Heart right ventricle (tissue), 16 donors: ENCODE measurements at regions of chr15 and their contacts with region 1.

Region 1: DNA sequence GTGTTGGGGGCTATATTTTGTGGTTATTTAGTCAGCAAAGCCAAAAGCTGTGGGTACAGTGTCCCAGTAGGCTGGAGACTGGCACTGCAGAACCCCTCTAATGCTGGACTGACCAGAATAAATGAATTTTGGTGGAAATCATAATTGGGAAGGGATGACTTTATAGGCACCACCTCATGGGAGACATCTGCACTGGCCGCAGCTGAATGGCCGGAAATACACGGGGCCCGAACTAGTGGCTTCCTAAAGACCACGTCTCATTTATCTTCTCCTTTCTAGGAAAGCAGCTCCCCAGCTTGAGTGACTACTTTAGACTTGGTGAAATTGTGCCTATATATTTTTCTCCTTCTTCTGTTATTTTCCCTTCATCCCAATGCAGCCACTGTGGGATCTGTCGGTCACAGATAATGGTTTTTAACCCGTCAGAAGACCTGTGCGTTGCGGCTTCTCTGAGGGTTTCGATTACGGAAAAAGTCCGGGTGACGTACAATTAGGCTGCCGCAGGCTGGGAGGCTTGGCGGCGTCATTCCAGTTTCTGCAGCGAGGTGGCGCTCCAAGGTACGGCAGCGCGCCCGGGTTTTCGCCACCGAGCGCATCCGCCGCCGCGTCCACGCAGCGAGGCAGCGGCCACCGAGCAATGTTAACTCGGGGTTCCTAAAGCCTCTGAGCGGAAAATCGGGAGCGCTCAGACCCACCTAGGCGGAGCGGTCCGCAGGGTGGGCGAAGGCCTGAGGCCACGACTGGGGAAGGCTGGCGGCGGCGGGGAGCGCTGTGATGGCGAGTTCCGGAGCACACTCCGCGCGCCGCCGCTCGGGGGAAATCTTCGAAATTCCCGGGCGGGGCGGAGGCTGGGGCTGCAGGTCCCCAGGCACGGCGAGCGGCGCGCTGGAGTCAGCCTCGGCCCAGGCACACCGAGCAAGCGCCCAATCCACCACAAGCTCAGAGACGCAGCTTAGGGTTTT is 26.3 kb downstream of the NR2F2 start:
- DNase-seq: peak; percentile 82 to 85
- ATAC-seq: peak; percentile 50 to 71 (median 66)
- H3K4me3 ChIP-seq: peak overlapping the region; percentile 37 to 95 (median 68)
- H3K27ac ChIP-seq: peak overlapping the region in 9 of 10 donors; percentile 49 to 89 (median 70)
- H3K4me1 ChIP-seq: peaks cover 0 to 75% (median 41%) of the 10 kb centered on the region in 9 donors
- H3K27me3 ChIP-seq: peaks cover 0 to 98% (median 82%) of the 10 kb centered on the region in 7 donors
- CTCF ChIP-seq: peak; percentile 95 to 99 (median 98)

Region 2: DNA sequence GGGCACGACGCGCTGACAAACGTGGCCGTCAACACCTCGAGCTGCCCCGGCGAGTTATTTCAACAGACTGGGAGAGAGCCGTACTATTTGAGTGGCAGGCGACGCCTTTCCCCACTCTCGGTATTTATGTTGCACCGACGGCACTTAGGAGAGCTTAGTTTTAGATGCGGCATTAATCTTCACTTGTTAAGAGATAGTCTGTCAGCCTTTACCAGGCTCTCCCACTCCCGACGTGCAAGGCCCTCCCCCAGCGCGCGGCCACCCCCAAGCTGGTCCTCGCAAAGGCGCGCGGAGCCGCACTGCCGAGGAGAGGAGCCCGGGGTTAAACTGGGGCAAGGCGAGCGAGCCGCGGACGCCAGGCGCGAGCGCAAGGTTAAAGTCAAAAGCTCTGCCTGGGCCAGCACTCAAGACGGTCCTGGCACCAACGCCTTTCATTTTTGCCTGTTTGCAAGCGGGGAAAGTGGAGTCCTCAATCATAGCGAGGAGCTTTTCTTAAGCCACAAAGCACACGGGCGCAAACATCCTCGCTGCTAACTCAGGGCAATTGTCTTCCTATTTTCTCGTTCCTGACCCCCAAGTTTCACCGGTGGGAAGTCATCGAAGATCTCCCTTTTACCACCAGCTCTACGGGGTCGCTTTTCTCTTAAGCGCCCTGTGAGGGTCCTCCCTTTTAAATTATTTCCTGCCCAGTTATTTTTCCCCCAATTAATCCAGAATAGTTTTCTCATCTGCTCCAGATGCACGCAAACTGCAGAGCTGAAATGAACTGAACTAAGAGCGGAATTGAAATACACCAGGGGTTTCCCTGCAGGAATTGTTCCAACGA is 60.4 kb after region 1 on chr15:
- intact Hi-C with region 1: loop called in 1 of 10 experiments (anchors 10 kb)
- DNase-seq: no peak
- ATAC-seq: peak in 1 of 8 donors; percentile 47
- H3K4me3 ChIP-seq: peak overlapping the region in 9 of 10 donors; percentile 12 to 43 (median 26)
- H3K27ac ChIP-seq: no peak overlapping the region
- H3K4me1 ChIP-seq: peaks cover 3 to 21% (median 16%) of the 10 kb centered on the region in 9 donors
- H3K27me3 ChIP-seq: peaks cover 26 to 100% (median 99%) of the 10 kb centered on the region in 7 donors
- CTCF ChIP-seq: no peak

Region 3: GRCh38 chr15:96701443-96701842 is 344.7 kb after region 1 on chr15:
- intact Hi-C with region 1: loop called in 1 of 10 experiments (anchors 10 kb)
- DNase-seq: no peak
- ATAC-seq: no peak
- H3K4me3 ChIP-seq: no peak overlapping the region
- H3K27ac ChIP-seq: no peak overlapping the region
- H3K4me1 ChIP-seq: no peaks in the 10 kb centered on the region
- H3K27me3 ChIP-seq: peaks cover 0 to 43% (median 17%) of the 10 kb centered on the region in 7 donors
- CTCF ChIP-seq: peak in 4 of 9 donors; percentile 11 to 29 (median 22)

Region 4: DNA sequence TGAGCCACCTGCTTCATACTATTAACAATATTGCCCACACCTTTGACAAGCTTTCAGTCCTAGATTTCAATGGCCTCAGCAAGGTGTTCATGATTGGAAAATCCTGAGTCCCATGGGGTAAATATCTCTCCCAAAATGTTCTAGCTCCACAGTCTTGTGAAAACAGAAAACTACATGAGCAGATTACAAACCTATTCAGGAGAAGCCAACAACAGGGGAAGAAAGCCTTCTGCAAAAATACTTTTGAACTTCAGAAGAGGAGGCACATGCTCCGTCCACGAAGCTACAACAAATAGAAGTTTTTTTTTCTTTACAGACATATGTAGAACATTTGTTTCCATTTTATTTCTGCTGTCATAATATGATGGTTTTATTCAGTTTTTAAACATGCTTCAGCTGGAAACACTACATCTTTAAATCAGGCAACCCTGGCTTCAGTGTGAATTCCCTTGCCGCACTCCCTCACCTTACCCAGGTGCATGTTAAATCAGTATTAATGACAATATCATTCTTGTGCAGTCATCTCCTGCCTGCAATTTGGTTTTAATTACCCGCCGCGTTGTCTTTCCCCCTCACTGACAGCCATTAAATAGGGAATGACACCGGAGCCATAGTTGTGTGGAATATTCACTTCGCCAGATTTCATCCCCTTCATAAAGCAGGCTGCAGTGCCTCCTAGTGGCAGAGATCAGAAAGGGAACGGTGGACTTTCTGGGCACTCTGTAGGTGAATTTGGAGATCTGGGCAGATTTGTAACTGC is 878.3 kb after region 1 on chr15:
- intact Hi-C with region 1: loop called in 8 of 10 experiments (anchors 5 to 10 kb)
- DNase-seq: peak; percentile 15 to 44
- ATAC-seq: peak in 3 of 8 donors; percentile 63 to 65 (median 63)
- H3K4me3 ChIP-seq: peak overlapping the region in 1 of 10 donors; percentile 6
- H3K27ac ChIP-seq: no peak overlapping the region
- H3K4me1 ChIP-seq: peaks cover 0 to 4% (median 0%) of the 10 kb centered on the region in 9 donors
- H3K27me3 ChIP-seq: peaks cover 0 to 9% (median 0%) of the 10 kb centered on the region in 7 donors
- CTCF ChIP-seq: peak; percentile 65 to 89 (median 86)

Region 5: DNA sequence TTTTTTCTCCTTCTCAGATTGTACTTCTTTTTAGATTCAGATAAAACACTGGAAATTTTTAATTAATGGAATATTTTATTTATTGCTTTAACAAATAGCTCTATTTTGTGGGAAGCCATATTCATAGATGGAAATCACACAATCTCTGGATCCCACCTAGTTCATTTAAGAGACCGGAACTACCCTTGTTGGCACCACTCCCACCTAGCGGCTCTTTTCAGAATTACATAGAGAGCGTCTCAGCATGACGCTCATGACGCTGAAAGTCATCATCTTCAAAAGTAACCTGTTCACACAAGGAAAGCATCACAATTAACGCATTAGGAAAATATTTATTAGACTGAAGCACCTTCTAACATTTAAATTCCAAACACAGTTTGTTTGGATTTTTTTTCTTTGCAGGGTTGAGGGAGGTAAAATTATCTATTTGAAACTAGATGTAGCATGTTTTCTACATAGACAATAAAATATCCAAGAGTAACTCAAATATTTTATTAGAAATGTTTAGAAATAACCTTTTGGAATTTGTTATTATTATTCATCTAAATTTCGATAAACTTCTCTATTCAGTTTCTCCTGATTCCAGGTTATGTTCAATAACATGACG is 1388.8 kb after region 1 on chr15:
- intact Hi-C with region 1: loop called in 7 of 10 experiments (anchors 5 to 10 kb)
- DNase-seq: peak in 1 of 2 donors; percentile 9
- ATAC-seq: no peak
- H3K4me3 ChIP-seq: no peak overlapping the region
- H3K27ac ChIP-seq: no peak overlapping the region
- H3K4me1 ChIP-seq: no peaks in the 10 kb centered on the region
- H3K27me3 ChIP-seq: no peaks in the 10 kb centered on the region
- CTCF ChIP-seq: peak; percentile 32 to 72 (median 61)